ENCODE measurements at regions of chr22 and their contacts with region 1.

Region 1: GRCh38 chr22:41746567-41747400 is 47.5 kb downstream of the MEI1 start:
- DNase-seq: peak; percentile 46 to 77
- H3K4me3 ChIP-seq: no peak overlapping the region
- H3K27ac ChIP-seq: no peak overlapping the region
- H3K4me1 ChIP-seq: no peaks in the 10 kb centered on the region
- H3K27me3 ChIP-seq: no peaks in the 10 kb centered on the region; a peak in 1 of 7 replicates
- CTCF ChIP-seq: peak; percentile 83 to 93 (median 85)
- EP300 ChIP-seq: no peak
- POLR2A ChIP-seq: no peak
- RAD21 ChIP-seq: peak; percentile 79 to 84

Region 2: DNA sequence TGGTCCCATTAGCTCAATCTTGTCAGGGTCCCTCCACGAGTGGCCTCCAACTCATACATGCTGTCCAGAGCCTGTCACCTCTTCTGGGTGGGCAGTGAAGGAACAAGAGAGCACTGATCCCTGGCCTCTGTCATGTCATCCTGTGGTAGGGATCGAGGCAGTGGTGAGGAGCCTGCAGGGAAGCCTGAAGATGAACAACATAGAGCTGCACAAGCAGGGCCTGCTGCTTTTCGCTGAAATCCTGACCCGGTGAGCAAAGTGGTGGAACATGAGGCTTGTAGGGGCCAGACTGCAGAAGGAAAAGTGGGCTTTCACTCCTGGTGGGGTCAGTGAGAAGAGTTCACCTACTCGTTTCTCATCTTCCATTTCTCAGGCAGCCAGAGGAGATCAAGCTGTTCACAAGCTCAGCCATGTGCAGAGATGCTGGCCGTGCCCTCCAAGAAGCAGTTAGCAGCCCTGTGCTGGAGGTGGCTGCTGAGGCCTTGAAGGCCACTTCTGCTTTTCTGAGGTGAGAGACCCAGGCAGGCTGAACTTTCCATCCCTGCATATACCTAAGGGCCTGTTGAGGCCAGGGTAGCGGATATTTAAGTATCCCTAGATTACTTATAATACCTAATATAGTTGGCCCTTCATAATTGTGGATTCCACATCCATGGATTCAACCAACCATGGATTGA is 14.6 kb before region 1 on chr22:
- CTCF ChIA-PET with region 1: interaction called, 16 read pairs
- POLR2A ChIA-PET with region 1: interaction called, 3 read pairs
- DNase-seq: no peak
- H3K4me3 ChIP-seq: no peak overlapping the region
- H3K27ac ChIP-seq: no peak overlapping the region
- H3K4me1 ChIP-seq: no peaks in the 10 kb centered on the region
- H3K27me3 ChIP-seq: no peaks in the 10 kb centered on the region
- CTCF ChIP-seq: no peak
- EP300 ChIP-seq: no peak
- POLR2A ChIP-seq: no peak
- RAD21 ChIP-seq: no peak

Region 3: GRCh38 chr22:41762980-41763779 is 16.4 kb after region 1 on chr22:
- CTCF ChIA-PET with region 1: interaction called, 54 read pairs
- POLR2A ChIA-PET with region 1: interaction called, 3 read pairs
- DNase-seq: peak; percentile 67 to 94
- H3K4me3 ChIP-seq: no peak overlapping the region
- H3K27ac ChIP-seq: no peak overlapping the region
- H3K4me1 ChIP-seq: no peaks in the 10 kb centered on the region
- H3K27me3 ChIP-seq: no peaks in the 10 kb centered on the region
- CTCF ChIP-seq: peak; percentile 71 to 94 (median 84)
- EP300 ChIP-seq: no peak
- POLR2A ChIP-seq: no peak
- RAD21 ChIP-seq: peak; percentile 42 to 64; a peak in 3 of 4 replicates

Region 4: DNA sequence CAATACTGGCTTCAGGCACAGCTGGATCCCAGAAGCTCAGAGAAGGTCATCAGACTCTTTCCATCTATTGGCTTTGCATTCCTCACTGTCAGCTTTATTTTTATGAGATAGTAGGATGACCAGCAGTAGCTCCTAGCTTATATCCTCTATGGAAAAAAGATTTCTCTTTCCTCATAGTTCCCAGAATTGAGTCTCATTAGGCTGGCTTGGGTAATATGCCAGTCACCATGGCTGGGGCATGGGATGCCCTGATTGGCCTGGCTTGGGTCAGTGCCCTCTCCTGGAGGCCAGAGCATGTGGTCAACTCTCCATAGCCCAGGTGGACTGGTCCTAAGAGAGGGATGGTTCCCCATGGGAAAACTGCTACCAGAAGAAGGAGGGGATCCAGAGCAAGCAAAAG is 39.6 kb after region 1 on chr22:
- CTCF ChIA-PET with region 1: interaction called, 21 read pairs
- POLR2A ChIA-PET with region 1: no interaction called
- DNase-seq: no peak
- H3K4me3 ChIP-seq: no peak overlapping the region
- H3K27ac ChIP-seq: no peak overlapping the region
- H3K4me1 ChIP-seq: no peaks in the 10 kb centered on the region; a peak in 1 of 7 replicates
- H3K27me3 ChIP-seq: no peaks in the 10 kb centered on the region; a peak in 2 of 7 replicates
- CTCF ChIP-seq: no peak
- EP300 ChIP-seq: no peak
- POLR2A ChIP-seq: no peak
- RAD21 ChIP-seq: no peak

Region 5: DNA sequence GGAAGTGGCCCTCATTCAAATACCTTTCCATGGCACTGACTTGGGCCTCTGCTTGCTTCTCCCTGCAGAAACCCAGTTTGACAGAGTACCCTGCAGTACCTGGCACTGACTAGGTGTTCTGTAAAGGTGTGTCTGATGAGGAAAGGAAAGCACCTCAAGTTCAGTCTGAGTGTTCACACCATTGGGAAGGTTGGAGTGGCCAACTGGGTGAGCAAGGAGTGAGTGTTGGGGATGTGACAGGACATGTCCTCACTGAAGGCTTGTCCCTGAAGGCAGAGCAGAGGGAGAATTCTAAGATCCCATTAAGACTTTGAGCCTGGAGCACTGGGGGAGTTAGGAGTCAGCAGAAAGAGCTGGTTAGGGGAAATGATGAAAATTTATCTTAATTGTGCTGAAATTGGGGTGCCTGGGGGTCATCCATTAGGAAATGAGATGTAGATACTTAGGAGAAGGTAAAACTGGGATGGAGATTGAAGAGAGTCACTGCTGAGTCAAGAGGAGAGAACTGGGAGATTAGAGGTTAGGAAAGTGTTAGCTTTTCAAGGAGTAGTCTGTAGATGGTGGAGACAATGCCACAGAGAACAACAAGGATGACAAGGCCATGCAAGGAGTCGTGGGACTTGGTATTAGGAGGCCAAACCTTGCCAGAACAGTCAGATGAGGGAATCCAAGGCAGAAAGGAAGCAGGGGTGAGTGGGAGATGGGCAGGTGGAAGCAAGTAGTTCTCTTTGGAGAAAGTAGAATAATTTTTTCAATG is 92.3 kb after region 1 on chr22:
- CTCF ChIA-PET with region 1: no interaction called
- POLR2A ChIA-PET with region 1: no interaction called
- DNase-seq: no peak
- H3K4me3 ChIP-seq: no peak overlapping the region
- H3K27ac ChIP-seq: no peak overlapping the region
- H3K4me1 ChIP-seq: peaks cover 0 to 10% (median 4%) of the 10 kb centered on the region in 4 experiments; a peak in 4 of 7 replicates
- H3K27me3 ChIP-seq: no peaks in the 10 kb centered on the region
- CTCF ChIP-seq: no peak
- EP300 ChIP-seq: no peak
- POLR2A ChIP-seq: no peak
- RAD21 ChIP-seq: no peak

Region 6: DNA sequence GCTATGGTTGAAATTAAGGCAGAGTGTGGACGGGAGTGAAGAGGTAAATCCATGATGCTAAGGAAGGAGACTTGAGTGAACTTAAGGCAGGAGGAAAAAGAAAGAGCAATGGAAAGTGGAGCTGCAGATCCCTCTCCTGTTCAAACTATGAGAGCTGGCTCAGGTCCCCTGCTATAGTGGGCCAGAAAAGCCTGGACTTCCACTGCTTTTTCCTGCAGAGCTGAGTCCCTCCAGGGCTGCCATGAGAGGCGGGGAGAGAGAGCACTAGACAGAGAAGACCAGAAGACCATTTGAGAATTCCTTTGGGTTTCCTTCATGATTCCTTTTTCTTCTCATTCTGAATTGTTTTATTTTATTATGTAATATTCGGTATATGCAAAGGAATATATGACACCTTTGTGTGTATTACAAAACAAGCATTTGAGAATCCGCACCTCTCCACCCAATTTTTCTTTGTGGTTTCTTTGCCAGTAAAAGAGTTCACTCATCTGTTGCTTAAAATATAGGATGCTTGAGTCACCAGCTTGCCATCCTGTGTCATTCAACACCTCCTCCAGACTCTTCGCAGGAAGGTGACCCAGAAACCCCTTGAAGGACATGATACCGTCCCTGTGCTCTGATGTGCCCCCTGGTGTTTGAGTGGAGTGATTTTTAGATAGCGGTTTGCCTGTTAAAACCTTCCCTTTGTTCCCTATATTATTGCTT is 110.5 kb after region 1 on chr22:
- CTCF ChIA-PET with region 1: interaction called, 10 read pairs
- POLR2A ChIA-PET with region 1: no interaction called
- DNase-seq: peak; percentile 43 to 63
- H3K4me3 ChIP-seq: no peak overlapping the region
- H3K27ac ChIP-seq: no peak overlapping the region
- H3K4me1 ChIP-seq: peaks cover 0 to 1% (median 0%) of the 10 kb centered on the region in 4 experiments; a peak in 1 of 7 replicates
- H3K27me3 ChIP-seq: no peaks in the 10 kb centered on the region
- CTCF ChIP-seq: peak; percentile 35 to 75 (median 59)
- EP300 ChIP-seq: no peak
- POLR2A ChIP-seq: no peak
- RAD21 ChIP-seq: peak; percentile 53 to 62